Lower leg skin (tissue), 4 donors: ENCODE measurements at regions of chr1 and their contacts with region 1.

Region 1: GRCh38 chr1:156456622-156457465 is 43.7 kb downstream of the MEF2D start:
- DNase-seq: peak; percentile 99 to 100
- H3K4me3 ChIP-seq: peak overlapping the region; percentile 30
- CTCF ChIP-seq: no peak
- POLR2A ChIP-seq: peak in 1 of 2 donors; percentile 50

Region 2: GRCh38 chr1:155951753-155952504 is 504.9 kb before region 1 on chr1:
- intact Hi-C with region 1: no loop called
- DNase-seq: no peak
- H3K4me3 ChIP-seq: no peak overlapping the region
- CTCF ChIP-seq: no peak
- POLR2A ChIP-seq: no peak

Region 3: GRCh38 chr1:156608036-156608674 is 151.3 kb after region 1 on chr1:
- intact Hi-C with region 1: loop called (anchors 5 kb)
- DNase-seq: peak in 1 of 2 donors; percentile 53
- H3K4me3 ChIP-seq: no peak overlapping the region
- CTCF ChIP-seq: peak in 1 of 3 donors; percentile 57
- POLR2A ChIP-seq: no peak